WTC11 (cell line): ENCODE measurements at regions of chr16 and their contacts with region 1.

Region 1: GRCh38 chr16:84672276-84673202 is 24.2 kb downstream of the KLHL36 start:
- DNase-seq: peak; percentile 92
- ATAC-seq: peak; percentile 84
- H3K4me3 Mint-ChIP-seq: no peak overlapping the region
- H3K27ac Mint-ChIP-seq: peak overlapping the region; percentile 63
- H3K4me1 Mint-ChIP-seq: peaks cover 35% of the 10 kb centered on the region
- H3K27me3 Mint-ChIP-seq: no peaks in the 10 kb centered on the region
- CTCF ChIP-seq: peak; percentile 91

Region 2: DNA sequence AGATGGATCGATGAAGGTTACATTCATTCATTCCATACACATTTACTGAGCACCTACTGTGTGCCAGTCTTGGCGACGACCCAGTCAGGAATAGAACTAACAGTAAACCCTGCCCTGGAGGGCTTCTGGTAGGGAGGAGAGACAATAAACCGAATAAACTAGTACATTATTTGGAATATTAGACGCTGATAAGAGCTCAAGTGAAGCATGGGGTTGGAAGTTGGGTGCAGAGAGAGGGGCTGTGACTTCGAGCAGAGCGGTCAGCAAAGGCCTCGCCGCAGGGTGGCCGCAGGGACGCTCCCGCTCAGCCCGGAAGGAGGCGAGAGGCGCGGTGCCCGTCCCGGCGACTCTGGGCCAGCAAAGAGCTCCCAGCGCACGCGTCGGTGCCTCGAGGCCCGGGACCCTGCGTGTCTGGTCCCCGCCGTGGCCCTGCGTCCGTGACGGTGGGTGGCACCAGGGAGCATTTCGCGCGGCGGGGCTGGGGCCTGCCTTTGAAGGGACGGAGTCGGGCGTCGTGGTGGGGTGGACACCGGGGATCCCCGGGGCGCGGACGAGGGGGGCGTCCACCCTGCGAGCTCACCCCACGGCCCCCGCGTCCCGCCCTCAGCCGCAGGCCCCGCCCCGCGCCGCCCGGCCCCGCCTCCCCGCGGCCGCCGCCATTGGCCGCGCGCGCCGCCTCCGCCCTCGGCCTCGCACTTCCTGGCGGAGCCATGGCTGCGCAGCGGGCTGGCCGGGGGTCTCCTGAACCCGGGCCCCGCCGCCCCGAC is 24.5 kb before region 1 on chr16 and contains the start of gene KLHL36:
- CTCF ChIA-PET with region 1: interaction called, 23 read pairs
- POLR2A ChIA-PET with region 1: no interaction called
- DNase-seq: no peak
- ATAC-seq: peak; percentile 84
- H3K4me3 Mint-ChIP-seq: peak within 1 kb of the TSS; percentile 81
- H3K27ac Mint-ChIP-seq: 0 out of 2 replicates have a peak within 1 kb of the TSS, but pooled peaks have one; percentile 29
- H3K4me1 Mint-ChIP-seq: peaks cover 21% of the 10 kb centered on the region
- H3K27me3 Mint-ChIP-seq: peaks cover 19% of the 10 kb centered on the region
- CTCF ChIP-seq: no peak
- total RNA-seq, gene KLHL36: 55.7 to 56.1 TPM (median 55.8 TPM) in 3 replicates

Region 3: DNA sequence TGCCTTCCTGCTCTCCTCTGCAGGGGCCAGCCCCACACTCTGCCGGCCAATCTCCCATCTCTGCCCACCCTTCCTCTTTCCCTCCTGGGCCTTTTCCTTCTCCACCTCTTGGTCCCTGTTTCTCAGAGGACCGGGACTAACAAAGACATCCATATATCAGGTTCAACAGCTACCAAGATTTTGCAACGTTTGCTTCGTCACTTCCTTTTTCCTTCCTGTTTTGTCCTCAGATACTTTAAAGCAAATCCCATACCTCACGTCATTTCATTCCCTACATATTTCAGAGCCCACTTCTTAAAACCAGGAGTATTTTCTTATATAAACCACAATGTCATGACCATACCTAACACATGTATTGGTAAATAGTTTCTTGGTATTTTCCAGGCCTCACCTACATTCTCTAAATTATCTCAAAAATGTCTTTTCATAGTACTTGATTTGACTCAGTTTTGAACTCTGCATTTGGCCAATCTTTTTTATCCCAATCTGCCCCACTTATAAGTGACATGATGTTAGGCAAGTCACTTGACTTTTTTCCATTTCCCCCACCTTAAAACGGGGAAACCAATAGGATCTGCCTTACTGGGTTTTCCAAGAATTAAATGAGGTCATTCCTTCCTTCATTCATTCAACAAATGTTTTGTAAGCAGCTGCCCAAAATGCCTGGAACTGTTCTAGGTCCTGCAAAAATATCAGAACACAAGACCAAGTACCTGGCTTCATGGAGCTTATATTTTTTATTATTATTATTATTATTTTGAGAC is 20.1 kb after region 1 on chr16:
- CTCF ChIA-PET with region 1: interaction called, 13 read pairs
- POLR2A ChIA-PET with region 1: no interaction called
- DNase-seq: no peak
- ATAC-seq: no peak
- H3K4me3 Mint-ChIP-seq: no peak overlapping the region
- H3K27ac Mint-ChIP-seq: no peak overlapping the region
- H3K4me1 Mint-ChIP-seq: no peaks in the 10 kb centered on the region
- H3K27me3 Mint-ChIP-seq: peaks cover 3% of the 10 kb centered on the region; the same call in 1 of the 2 replicates
- CTCF ChIP-seq: no peak

Region 4: DNA sequence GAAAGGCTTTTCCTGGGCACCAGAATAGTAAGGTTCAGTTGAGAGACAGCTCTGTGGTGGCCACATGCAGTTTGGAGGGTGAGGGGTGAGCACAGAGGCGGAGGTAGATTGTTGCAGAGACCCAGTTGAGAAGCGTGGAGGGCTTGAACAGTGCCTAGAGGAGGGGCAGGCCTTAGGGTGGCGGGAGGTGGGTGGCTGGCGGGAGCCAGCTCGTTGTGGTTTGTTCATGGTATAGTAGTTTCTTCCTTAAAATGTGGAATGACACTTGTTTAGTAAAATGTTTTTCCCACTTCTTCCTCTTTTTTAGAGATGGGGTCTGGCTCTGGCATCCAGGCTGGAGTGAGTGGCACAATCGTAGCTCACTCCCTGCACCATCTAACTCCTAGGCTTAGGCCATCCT is 41.5 kb after region 1 on chr16:
- CTCF ChIA-PET with region 1: interaction called, 11 read pairs
- POLR2A ChIA-PET with region 1: no interaction called
- DNase-seq: no peak
- ATAC-seq: peak; percentile 41
- H3K4me3 Mint-ChIP-seq: no peak overlapping the region
- H3K27ac Mint-ChIP-seq: peak overlapping the region; percentile 44
- H3K4me1 Mint-ChIP-seq: peaks cover 77% of the 10 kb centered on the region
- H3K27me3 Mint-ChIP-seq: no peaks in the 10 kb centered on the region
- CTCF ChIP-seq: no peak